AG04450 (cell line): ENCODE measurements at regions of chr6 and their contacts with region 1.

Region 1: GRCh38 chr6:116217069-116217468 is 36.8 kb downstream of the TSPYL4 start:
- DNase-seq: no peak
- H3K4me3 ChIP-seq: no peak overlapping the region
- H3K27ac ChIP-seq: no peak overlapping the region
- H3K27me3 ChIP-seq: no peaks in the 10 kb centered on the region
- CTCF ChIP-seq: peak; percentile 68

Region 2: DNA sequence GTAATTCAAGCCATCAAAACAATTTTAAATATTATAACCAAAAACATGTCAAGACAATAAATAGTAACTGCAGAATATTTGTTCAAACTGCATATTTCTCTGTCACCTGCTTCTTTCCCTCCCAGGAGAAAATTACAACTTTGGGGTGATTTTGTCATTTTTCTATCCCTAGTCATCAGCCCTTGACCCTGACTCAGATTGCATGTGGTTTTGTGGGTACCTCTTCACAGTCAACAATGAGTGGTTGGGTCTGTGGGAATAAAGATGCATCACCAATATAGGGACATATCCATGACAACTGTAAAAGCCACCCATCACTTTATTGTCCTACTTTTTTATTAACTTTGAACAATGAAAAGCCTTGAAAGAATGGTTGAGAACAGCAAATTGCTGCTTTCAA is 98.5 kb before region 1 on chr6:
- CTCF ChIA-PET with region 1: interaction called, 14 read pairs
- POLR2A ChIA-PET with region 1: no interaction called
- DNase-seq: no peak
- H3K4me3 ChIP-seq: no peak overlapping the region
- H3K27ac ChIP-seq: no peak overlapping the region
- H3K27me3 ChIP-seq: no peaks in the 10 kb centered on the region
- CTCF ChIP-seq: no peak

Region 3: GRCh38 chr6:116206231-116206903 is 10.7 kb before region 1 on chr6:
- CTCF ChIA-PET with region 1: interaction called, 58 read pairs
- POLR2A ChIA-PET with region 1: no interaction called
- DNase-seq: no peak
- H3K4me3 ChIP-seq: no peak overlapping the region
- H3K27ac ChIP-seq: no peak overlapping the region
- H3K27me3 ChIP-seq: no peaks in the 10 kb centered on the region
- CTCF ChIP-seq: no peak

Region 4: DNA sequence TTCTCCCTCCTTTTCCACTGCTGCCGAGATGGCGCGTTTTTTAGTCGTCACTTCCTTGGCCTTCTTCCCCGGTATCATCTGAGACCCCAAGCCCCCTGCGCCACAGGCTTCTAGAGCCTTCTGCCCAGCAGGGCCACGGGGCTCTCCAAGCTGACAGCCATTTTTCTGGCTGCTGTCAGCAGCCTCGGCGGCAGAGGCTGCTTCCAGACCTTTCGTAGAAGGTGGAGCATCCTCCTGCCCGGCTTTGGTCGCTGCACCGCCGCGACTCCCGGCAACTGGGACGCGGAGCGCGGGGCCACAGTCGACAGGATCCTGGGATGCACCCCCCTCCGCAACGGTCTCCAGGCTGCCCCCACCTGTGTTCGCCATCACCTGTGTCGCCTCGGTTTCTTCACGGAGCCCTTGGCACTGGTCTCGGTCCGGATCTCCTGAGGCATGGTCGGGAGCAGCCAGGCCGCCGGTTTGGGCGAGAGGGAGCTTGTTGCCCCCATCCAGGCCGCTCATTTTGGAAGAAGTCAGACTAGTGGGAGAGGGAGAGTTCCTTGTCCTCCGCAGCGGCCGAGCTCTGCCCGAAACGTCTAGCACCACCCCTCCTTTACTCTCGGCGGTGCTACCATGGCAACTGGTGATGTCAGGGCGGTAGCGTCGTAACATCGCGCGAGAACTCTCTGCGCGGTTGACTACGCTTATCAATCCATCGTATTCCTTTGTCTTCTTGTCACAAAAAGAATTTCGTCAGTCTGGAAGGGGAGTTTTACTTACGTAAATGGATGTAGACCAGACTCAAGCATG is 36.6 kb after region 1 on chr6 and contains the start of gene TSPYL4:
- CTCF ChIA-PET with region 1: interaction called, 40 read pairs
- POLR2A ChIA-PET with region 1: interaction called, 4 read pairs
- DNase-seq: peak; percentile 91
- H3K4me3 ChIP-seq: peak within 1 kb of the TSS; percentile 97
- H3K27ac ChIP-seq: peak within 1 kb of the TSS; percentile 86
- H3K27me3 ChIP-seq: no peaks in the 10 kb centered on the region
- CTCF ChIP-seq: no peak
- polyA plus RNA-seq, gene TSPYL4: 22.0 and 25.1 TPM in 2 replicates

Region 5: GRCh38 chr6:116561377-116562018 is 344.4 kb after region 1 on chr6:
- CTCF ChIA-PET with region 1: interaction called, 52 read pairs
- POLR2A ChIA-PET with region 1: interaction called, 11 read pairs
- DNase-seq: peak; percentile 51
- H3K4me3 ChIP-seq: no peak overlapping the region
- H3K27ac ChIP-seq: no peak overlapping the region
- H3K27me3 ChIP-seq: no peaks in the 10 kb centered on the region
- CTCF ChIP-seq: peak; percentile 91

Region 6: GRCh38 chr6:116648156-116648555 is 431.1 kb after region 1 on chr6:
- CTCF ChIA-PET with region 1: interaction called, 10 read pairs
- POLR2A ChIA-PET with region 1: no interaction called
- DNase-seq: no peak
- H3K4me3 ChIP-seq: no peak overlapping the region
- H3K27ac ChIP-seq: no peak overlapping the region
- H3K27me3 ChIP-seq: no peaks in the 10 kb centered on the region
- CTCF ChIP-seq: no peak